ENCODE measurements at regions of chr12 and their contacts with region 1.

Region 1: GRCh38 chr12:2682296-2683251 is 112.2 kb upstream of the FKBP4 start:
- ATAC-seq: peak; percentile 25 to 90 (median 76)
- H3K4me3 ChIP-seq: no peak overlapping the region
- H3K27ac ChIP-seq: no peak overlapping the region
- H3K4me1 ChIP-seq: no peaks in the 10 kb centered on the region

Region 2: DNA sequence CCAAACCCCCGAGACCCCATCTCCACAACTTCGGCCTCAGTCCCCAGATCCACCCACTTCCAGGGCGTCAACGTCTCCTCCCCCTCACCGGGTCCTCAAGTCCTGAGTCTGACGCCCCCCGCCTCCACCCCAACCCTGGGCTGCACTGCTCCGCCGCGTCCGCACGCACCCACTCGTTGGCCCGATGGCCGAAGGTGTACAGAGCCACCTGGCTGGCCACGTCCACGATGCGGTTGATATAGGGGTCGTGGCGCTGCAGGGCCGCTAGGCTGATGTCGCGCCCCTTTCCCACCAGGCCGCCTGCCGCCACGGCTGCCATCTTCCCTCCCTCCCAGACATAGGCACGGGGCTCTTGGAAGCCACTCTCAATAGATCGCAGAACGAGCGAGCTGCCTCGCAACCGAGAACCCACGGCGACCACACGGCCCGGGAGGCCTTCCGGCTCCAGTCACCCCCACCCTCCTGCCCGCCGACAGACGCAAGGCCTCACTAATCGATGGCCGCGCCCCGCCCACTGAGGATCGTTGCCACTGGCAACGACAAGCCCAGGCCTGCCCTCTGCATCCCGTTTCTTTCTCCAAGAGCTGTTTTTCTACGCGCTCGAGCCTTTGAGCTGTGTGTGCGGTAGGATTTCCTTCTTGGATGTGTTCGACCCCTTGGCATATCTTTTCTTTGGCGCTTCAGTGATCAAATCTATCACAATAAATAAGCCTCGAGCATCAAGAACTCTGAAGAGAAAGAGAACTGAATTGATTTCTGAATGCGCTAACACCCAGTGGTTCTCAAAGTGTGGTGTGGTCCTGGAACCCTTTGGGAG is 678.3 kb before region 1 on chr12 and contains the start of gene DCP1B:
- in situ Hi-C with region 1: no loop called
- ATAC-seq: peak; percentile 99 to 100 (median 99)
- H3K4me3 ChIP-seq: peak within 1 kb of the TSS; percentile 73 to 98 (median 93)
- H3K27ac ChIP-seq: peak within 1 kb of the TSS; percentile 89 to 94
- H3K4me1 ChIP-seq: peaks cover 14 to 23% of the 10 kb centered on the region in 2 donors
- total RNA-seq, gene DCP1B: 12.7 to 24.5 (median 15.6) TPM

Region 3: DNA sequence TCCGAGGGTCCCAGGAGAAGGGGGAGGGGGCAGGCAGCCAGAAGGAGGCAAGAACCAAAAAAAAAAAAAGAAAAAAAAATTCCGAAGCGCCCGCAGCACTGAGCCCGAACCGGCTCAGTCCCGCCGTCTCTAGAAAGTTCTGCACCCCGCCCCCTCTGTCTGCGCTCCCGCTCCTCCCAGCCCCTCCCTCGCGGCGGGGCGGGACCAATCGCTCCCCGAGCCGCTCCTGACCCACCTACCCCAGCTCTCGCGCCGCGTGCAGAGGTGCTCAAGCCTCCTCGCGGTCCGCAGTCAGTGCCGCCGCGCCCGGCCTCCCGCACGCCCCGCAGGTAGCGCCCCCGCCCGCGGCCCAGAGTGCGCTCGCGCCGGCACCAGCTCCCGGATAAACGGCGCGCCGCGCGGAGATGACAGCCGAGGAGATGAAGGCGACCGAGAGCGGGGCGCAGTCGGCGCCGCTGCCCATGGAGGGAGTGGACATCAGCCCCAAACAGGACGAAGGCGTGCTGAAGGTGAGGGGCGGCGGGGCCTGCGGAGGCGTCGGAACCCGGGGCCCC is 112.2 kb after region 1 on chr12 and contains the start of gene FKBP4:
- in situ Hi-C with region 1: loop called in 1 of 9 experiments (anchors 25 kb)
- ATAC-seq: peak; percentile 79 to 92 (median 82)
- H3K4me3 ChIP-seq: peak within 1 kb of the TSS; percentile 77 to 100 (median 94)
- H3K27ac ChIP-seq: peak within 1 kb of the TSS; percentile 88 to 92
- H3K4me1 ChIP-seq: peaks cover 18 to 20% of the 10 kb centered on the region in 2 donors
- total RNA-seq, gene FKBP4: 45.3 to 127 (median 103) TPM

Region 4: GRCh38 chr12:3743803-3744202 is 1061.2 kb after region 1 on chr12:
- in situ Hi-C with region 1: no loop called
- ATAC-seq: peak in 1 of 8 experiments; percentile 73
- H3K4me3 ChIP-seq: no peak overlapping the region
- H3K27ac ChIP-seq: no peak overlapping the region
- H3K4me1 ChIP-seq: no peaks in the 10 kb centered on the region